Activated CD4-positive, alpha-beta T cell treated with anti-CD3 and anti-CD28 coated beads, Interleukin-2, amount 10 ng/mL, durations not matched to agents 7 days and 5 days (primary cell): ENCODE measurements at regions of chr12 and their contacts with region 1.

Region 1: DNA sequence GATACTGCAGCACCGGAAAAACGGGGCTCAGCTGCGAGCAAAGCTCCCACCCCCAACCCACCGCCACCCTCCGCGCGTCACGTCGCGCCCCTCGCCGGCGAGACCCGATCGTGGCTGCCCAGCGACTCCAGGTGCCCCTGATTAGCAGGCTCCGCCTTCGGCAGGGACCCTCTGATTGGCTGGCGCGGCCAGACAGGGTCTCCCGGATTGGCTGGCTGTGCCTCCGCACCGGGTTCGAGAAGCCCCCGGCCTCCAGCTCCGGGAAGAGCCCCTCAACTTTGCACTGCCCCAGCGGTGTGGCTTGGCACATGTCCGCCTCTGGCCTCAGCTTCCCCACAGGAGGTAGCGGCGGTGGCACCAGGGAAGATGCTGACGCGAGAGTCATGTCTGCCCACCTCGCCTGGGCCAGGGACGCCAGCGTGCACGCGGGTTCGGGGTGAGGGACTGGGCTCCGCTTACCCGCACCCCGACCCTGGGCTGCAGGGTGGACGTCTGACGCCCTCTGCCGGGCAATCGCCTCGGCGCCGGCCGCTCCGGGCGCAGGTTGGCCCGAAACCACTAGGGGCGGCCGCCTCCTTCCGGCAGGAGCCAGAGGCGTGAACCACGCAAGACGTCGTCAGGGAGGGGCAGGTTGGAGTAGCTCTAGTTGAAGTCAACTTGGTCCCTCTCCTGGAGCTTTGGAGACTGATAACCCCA is 498 bp upstream of the RHOF start:
- DNase-seq: peak; percentile 95
- H3K4me3 Mint-ChIP-seq: peak overlapping the region; percentile 85
- H3K27ac Mint-ChIP-seq: peak overlapping the region; percentile 88
- H3K4me1 Mint-ChIP-seq: peaks cover 60% of the 10 kb centered on the region
- H3K27me3 Mint-ChIP-seq: no peaks in the 10 kb centered on the region

Region 2: GRCh38 chr12:121697098-121697698 is 96.8 kb before region 1 on chr12:
- CTCF ChIA-PET with region 1: interaction called, 45 read pairs
- POLR2A ChIA-PET with region 1: no interaction called
- DNase-seq: peak; percentile 68
- H3K4me3 Mint-ChIP-seq: no peak overlapping the region
- H3K27ac Mint-ChIP-seq: no peak overlapping the region
- H3K4me1 Mint-ChIP-seq: peaks cover 4% of the 10 kb centered on the region
- H3K27me3 Mint-ChIP-seq: no peaks in the 10 kb centered on the region

Region 3: DNA sequence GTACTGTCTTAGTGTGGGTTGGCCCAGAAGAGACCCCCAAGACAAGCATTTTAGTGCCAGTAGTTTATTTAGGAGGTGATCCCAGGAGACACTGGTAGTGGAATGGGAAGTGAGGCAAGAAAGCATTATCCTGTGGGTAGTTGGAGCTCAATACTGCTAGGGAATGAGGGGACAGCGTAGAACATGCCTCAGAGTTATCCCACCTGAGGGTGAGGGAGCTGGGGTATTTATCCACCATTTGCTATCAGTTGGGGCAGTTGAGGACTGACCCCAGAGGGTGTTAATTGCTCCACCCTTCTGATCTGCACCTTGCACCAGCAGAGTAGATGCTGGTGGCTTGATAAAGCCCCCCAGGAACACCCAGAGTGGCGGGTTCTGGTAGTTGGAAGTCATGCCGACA is 38.4 kb before region 1 on chr12:
- CTCF ChIA-PET with region 1: interaction called, 12 read pairs
- POLR2A ChIA-PET with region 1: no interaction called
- DNase-seq: no peak
- H3K4me3 Mint-ChIP-seq: no peak overlapping the region
- H3K27ac Mint-ChIP-seq: no peak overlapping the region
- H3K4me1 Mint-ChIP-seq: peaks cover 16% of the 10 kb centered on the region
- H3K27me3 Mint-ChIP-seq: no peaks in the 10 kb centered on the region

Region 4: GRCh38 chr12:121823101-121823726 is 29.2 kb after region 1 on chr12:
- CTCF ChIA-PET with region 1: interaction called, 33 read pairs
- POLR2A ChIA-PET with region 1: no interaction called
- DNase-seq: no peak
- H3K4me3 Mint-ChIP-seq: no peak overlapping the region
- H3K27ac Mint-ChIP-seq: no peak overlapping the region
- H3K4me1 Mint-ChIP-seq: no peaks in the 10 kb centered on the region
- H3K27me3 Mint-ChIP-seq: no peaks in the 10 kb centered on the region

Region 5: GRCh38 chr12:121888478-121889266 is 94.7 kb after region 1 on chr12 and contains the start of gene PSMD9:
- CTCF ChIA-PET with region 1: interaction called, 40 read pairs
- POLR2A ChIA-PET with region 1: interaction called, 6 read pairs
- DNase-seq: peak; percentile 99
- H3K4me3 Mint-ChIP-seq: peak within 1 kb of the TSS; percentile 94
- H3K27ac Mint-ChIP-seq: peak within 1 kb of the TSS; percentile 98
- H3K4me1 Mint-ChIP-seq: peaks cover 39% of the 10 kb centered on the region
- H3K27me3 Mint-ChIP-seq: peaks cover 1% of the 10 kb centered on the region
- total RNA-seq, gene PSMD9: 60.0 to 62.0 TPM